ENCODE measurements at regions of chr19 and their contacts with region 1.

Region 1: GRCh38 chr19:38173291-38174041 is 50.6 kb downstream of the DPF1 start:
- DNase-seq: peak; percentile 81
- ATAC-seq: peak; percentile 96

Region 2: GRCh38 chr19:38049105-38049649 is 124.3 kb before region 1 on chr19:
- intact Hi-C with region 1: no loop called
- DNase-seq: no peak
- ATAC-seq: peak; percentile 47

Region 3: DNA sequence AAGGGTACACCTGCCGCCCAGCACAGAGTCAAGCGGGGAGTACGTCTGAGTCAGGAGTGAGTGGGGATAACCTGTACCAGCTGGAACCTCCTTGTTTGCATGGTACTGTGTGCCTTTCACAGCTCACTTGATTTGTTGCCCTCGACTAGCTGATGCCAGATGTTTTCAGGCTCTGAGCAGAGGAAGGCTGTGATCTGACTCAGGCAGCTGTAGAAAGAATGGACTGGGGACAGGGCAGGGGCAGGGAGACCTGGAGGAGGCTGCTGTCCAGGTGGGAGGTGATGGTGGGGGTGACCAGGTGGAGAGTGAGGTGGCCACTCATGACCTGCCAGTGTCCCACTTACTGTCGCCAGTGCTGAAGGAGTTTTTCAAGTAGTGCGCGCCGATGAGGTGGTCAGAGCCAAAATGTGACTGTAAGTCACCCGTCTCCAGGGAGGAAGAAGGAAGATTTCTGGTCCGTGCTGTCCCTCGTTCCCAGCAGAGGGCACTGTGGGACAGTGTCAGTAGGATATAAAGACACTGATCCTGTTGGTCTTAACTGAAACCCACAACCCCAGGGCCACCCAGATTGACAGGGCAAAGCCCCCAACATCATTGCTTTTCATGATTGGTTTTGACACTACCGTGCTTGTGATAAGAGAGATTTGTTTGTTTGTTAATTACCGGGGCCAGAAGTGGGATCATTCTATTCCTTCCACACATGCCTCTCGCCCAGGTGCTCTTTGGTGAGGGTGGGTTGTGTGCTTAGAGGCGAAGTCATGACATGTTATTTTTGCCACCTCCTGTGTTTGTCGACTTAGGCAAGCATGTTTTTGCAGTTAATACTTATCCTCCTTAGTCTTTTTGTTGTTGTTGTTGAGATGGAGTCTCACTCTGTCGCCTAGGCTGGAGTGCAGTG is 77.8 kb before region 1 on chr19:
- intact Hi-C with region 1: loop called (anchors 10 kb)
- DNase-seq: peak; percentile 76
- ATAC-seq: peak; percentile 40